ENCODE measurements at regions of chr10 and their contacts with region 1.

Region 1: DNA sequence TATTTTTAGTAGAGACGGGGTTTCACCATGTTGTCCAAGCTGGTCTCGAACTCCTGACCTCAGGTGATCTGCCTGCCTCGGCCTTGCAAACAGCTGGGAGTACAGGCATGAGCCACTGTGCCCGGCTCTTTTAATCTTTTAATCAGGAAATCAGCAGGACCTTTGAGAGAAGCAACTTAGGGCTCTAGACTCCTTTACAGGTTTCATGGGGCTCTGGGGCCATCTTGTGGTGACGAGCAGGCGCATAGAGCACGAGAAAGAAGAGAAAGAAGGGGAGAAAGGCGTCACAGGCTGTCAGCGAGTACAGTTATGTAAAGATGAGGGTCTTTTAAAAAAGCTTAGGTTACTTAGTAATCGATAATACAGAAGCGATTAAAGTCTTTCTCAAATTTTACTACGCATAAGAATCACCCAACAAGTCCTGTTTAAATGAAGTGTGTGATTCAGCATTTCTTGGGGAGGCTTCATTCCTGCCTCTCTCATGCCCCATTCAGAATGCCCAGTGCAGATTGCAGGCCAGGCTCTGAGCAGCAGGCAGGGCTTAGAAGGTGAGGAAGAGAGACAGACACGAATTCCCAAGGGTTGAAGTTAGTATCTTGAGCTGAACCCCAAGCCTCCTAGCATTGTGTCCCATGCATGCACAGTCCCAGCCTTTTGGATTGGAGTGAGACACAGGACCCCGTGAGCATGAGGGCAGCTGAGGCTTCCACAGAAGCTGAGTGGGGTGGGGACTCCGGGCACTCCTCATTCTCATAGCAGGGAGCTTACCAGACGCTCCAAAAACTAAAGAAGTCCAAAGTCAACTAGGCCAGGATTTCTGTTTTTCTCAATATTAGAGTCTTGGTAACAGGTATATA is 23.6 kb upstream of the PFKP start:
- DNase-seq: peak; percentile 62
- ATAC-seq: peak; percentile 69
- H3K4me3 Mint-ChIP-seq: no peak overlapping the region
- H3K27ac Mint-ChIP-seq: no peak overlapping the region
- H3K4me1 Mint-ChIP-seq: peaks cover 2% of the 10 kb centered on the region
- H3K27me3 Mint-ChIP-seq: peaks cover 13% of the 10 kb centered on the region

Region 2: GRCh38 chr10:2927958-2928840 is 115.5 kb before region 1 on chr10:
- CTCF ChIA-PET with region 1: interaction called, 13 read pairs
- DNase-seq: peak; percentile 77
- ATAC-seq: peak; percentile 80
- H3K4me3 Mint-ChIP-seq: no peak overlapping the region
- H3K27ac Mint-ChIP-seq: no peak overlapping the region
- H3K4me1 Mint-ChIP-seq: peaks cover 6% of the 10 kb centered on the region
- H3K27me3 Mint-ChIP-seq: peaks cover 22% of the 10 kb centered on the region

Region 3: GRCh38 chr10:3125527-3126170 is 81.9 kb after region 1 on chr10:
- CTCF ChIA-PET with region 1: no interaction called
- DNase-seq: no peak
- ATAC-seq: no peak
- H3K4me3 Mint-ChIP-seq: no peak overlapping the region
- H3K27ac Mint-ChIP-seq: no peak overlapping the region
- H3K4me1 Mint-ChIP-seq: no peaks in the 10 kb centered on the region
- H3K27me3 Mint-ChIP-seq: no peaks in the 10 kb centered on the region